Adrenal gland (tissue), 19 donors: ENCODE measurements at regions of chr11 and their contacts with region 1.

Region 1: GRCh38 chr11:122505304-122506006 is 150.1 kb upstream of the UBASH3B start:
- DNase-seq: peak; percentile 83 to 96 (median 89)
- H3K4me3 ChIP-seq: no peak overlapping the region
- H3K27ac ChIP-seq: no peak overlapping the region
- H3K4me1 ChIP-seq: no peaks in the 10 kb centered on the region
- H3K27me3 ChIP-seq: no peaks in the 10 kb centered on the region
- CTCF ChIP-seq: peak; percentile 56 to 97 (median 90)
- POLR2A ChIP-seq: no peak

Region 2: GRCh38 chr11:122137081-122137793 is 368.2 kb before region 1 on chr11:
- intact Hi-C with region 1: no loop called
- DNase-seq: no peak
- H3K4me3 ChIP-seq: no peak overlapping the region
- H3K27ac ChIP-seq: peak overlapping the region in 2 of 5 donors; percentile 7 to 20
- H3K4me1 ChIP-seq: peaks cover 0 to 9% of the 10 kb centered on the region in 2 donors
- H3K27me3 ChIP-seq: no peaks in the 10 kb centered on the region
- CTCF ChIP-seq: no peak
- POLR2A ChIP-seq: no peak

Region 3: DNA sequence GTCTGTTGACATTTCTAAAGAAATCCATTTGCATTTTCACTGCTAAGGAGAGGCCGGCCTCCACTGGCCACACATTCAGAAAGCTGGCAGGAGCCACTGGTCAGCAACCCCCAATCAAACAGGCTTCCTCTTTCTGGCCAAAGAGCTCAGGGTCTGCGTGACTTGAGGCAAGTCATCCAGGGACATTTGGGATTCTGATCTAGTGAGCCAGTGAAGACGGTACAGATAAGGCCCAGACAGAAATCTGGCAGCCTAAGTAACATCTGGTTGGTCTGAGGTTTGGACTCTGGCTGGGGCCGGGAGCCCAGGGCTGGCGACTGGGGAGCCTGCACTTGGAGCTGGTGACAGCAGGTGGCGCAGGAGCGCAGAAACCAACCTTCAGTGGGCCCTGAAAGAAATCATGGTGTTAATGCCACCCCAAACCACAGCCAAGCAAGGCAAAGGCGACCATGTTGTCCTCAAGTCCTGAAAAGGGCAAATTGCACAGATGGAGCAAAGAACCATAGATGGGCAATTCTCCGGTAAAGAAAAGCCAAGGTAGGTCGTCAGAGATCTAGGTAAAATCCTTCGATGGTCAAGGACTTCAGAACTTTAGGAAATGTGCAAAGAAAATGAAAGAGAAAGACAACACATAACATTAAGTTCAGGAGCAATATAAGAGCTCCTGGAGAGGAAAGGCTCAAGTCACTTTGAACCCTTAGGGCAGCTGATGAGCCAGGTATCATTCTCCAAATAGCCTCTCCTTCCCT is 290.0 kb before region 1 on chr11:
- intact Hi-C with region 1: loop called (anchors 5 to 10 kb)
- DNase-seq: peak; percentile 65 to 91 (median 82)
- H3K4me3 ChIP-seq: no peak overlapping the region
- H3K27ac ChIP-seq: peak overlapping the region in 2 of 5 donors; percentile 19 to 50
- H3K4me1 ChIP-seq: peaks cover 0 to 9% of the 10 kb centered on the region in 2 donors
- H3K27me3 ChIP-seq: no peaks in the 10 kb centered on the region
- CTCF ChIP-seq: peak; percentile 86 to 95 (median 92)
- POLR2A ChIP-seq: no peak

Region 4: DNA sequence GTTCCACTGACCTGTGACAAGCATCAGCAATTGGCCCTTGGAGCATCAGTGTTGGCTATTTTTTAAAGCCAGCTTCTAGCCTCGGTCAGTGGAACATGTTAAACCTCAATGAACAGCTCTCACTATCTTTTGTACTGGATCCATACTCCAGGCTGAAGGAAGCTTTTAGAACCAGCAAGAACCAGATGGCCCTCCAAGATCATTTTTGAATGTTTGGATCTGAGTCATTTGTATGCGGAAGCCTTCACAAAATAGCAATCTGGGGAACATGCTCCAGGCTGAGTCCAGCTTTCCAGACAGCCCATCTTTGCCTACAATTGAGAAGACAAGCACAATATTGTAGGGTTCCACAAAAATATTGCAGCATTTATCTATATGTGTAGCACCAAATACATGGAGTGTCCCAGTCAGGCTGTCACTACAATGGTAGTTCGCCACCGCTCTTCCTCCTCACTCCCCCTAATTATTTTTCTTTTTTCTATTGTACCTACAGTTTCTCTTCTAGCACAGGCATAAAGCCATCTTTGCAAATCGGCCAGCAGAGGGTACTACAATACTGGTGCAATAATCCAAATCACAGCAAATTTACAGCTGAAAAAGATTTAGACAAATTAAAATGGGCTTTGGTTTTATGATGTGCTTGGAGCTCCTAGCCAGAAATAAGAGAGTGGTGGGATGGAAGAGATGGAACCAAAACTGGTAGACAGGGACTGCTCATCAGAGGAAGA is 212.0 kb before region 1 on chr11:
- intact Hi-C with region 1: loop called in 1 of 2 experiments (anchors 5 kb)
- DNase-seq: peak in 4 of 7 donors; percentile 24 to 58 (median 36)
- H3K4me3 ChIP-seq: no peak overlapping the region
- H3K27ac ChIP-seq: no peak overlapping the region
- H3K4me1 ChIP-seq: no peaks in the 10 kb centered on the region
- H3K27me3 ChIP-seq: no peaks in the 10 kb centered on the region
- CTCF ChIP-seq: peak in 5 of 6 experiments; percentile 44 to 65 (median 55)
- POLR2A ChIP-seq: no peak